Mammary epithelial cell (primary cell): ENCODE measurements at regions of chr17 and their contacts with region 1.

Region 1: GRCh38 chr17:62968445-62968923 is 2.4 kb downstream of the TANC2 start:
- DNase-seq: peak; percentile 86
- H3K4me3 ChIP-seq: peak overlapping the region; percentile 85 to 90 (median 90)
- H3K27ac ChIP-seq: peak overlapping the region; percentile 83
- H3K4me1 ChIP-seq: peaks cover 12% of the 10 kb centered on the region
- H3K27me3 ChIP-seq: no peaks in the 10 kb centered on the region
- CTCF ChIP-seq: peak; percentile 94 to 96

Region 2: DNA sequence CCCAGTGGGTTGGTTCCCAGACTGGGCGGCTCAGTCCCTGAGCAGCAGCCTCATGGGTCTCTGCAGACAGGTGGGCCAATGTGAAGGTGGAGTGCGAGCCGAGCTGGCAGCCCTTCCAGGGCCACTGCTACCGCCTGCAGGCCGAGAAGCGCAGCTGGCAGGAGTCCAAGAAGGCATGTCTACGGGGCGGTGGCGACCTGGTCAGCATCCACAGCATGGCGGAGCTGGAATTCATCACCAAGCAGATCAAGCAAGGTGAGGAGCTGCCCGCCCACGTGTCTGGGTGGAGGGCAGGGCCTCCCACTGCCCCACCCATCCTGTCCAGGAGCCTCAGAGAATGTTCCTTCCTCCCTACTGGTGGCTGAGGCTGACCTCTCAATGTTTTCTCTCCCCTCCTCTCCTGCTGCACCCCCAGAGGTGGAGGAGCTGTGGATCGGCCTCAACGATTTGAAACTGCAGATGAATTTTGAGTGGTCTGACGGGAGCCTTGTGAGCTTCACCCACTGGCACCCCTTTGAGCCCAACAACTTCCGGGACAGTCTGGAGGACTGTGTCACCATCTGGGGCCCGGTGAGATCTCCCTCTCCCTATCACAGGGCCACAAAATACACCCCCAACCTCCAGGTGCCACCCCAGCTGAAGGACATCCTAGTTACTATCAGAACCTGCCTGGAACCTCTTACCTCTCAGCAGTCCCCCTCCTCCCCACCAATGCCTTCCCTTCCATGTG is 296.7 kb before region 1 on chr17:
- CTCF ChIA-PET with region 1: no interaction called
- dilution Hi-C with region 1: no loop called
- in situ Hi-C with region 1: no loop called
- intact Hi-C with region 1: loop called (anchors 1 kb)
- DNase-seq: peak; percentile 97
- H3K4me3 ChIP-seq: peak overlapping the region in 2 of 3 experiments; percentile 28 to 32
- H3K27ac ChIP-seq: peak overlapping the region; percentile 63
- H3K4me1 ChIP-seq: peaks cover 56% of the 10 kb centered on the region
- H3K27me3 ChIP-seq: no peaks in the 10 kb centered on the region
- CTCF ChIP-seq: peak; percentile 22 to 54

Region 3: DNA sequence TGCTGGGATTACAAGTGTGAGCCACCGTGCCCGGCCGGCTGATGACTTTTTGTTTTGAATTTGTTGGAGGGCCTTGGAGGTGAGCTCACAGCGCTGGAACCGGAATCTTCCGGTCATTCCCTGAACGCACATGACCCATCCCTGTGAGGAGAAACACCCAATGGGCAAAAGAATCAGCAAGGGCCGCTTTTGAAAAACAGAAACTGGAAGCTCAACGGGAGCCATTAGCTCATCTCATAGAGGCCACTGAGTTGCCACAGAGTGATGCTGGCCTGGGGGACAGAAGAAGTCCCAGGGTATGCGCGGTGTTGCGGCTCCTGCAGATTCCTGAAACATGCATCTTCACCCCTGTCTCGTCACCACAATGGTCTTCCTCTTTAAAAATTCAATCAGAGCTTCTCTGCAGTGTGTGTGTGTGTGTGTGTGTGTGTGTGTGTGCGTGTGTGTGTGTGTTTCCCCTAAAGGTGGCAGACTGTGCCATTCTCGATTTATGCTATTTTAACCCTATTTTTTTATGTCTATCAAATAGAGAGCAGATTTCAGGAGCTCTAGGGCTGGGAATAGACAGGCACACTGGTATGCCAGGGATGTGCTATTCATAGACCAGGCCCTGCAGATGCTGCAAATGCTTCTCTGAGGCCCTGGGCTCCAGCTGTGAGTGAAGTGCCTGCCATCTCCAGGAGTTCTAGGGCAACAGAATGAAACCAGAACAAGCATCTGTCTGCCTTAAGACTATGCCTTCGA is 228.7 kb before region 1 on chr17:
- CTCF ChIA-PET with region 1: interaction called, 18 read pairs
- dilution Hi-C with region 1: no loop called
- in situ Hi-C with region 1: no loop called
- intact Hi-C with region 1: no loop called
- DNase-seq: no peak
- H3K4me3 ChIP-seq: no peak overlapping the region
- H3K27ac ChIP-seq: no peak overlapping the region
- H3K4me1 ChIP-seq: peaks cover 17% of the 10 kb centered on the region
- H3K27me3 ChIP-seq: no peaks in the 10 kb centered on the region
- CTCF ChIP-seq: no peak

Region 4: GRCh38 chr17:62778689-62779681 is 189.5 kb before region 1 on chr17:
- CTCF ChIA-PET with region 1: no interaction called
- dilution Hi-C with region 1: no loop called
- in situ Hi-C with region 1: loop called in 1 of 2 experiments (anchors 10 kb)
- intact Hi-C with region 1: loop called (anchors 1 kb)
- DNase-seq: peak; percentile 99
- H3K4me3 ChIP-seq: peak overlapping the region in 2 of 3 experiments; percentile 7 to 22
- H3K27ac ChIP-seq: peak overlapping the region; percentile 96
- H3K4me1 ChIP-seq: peaks cover 41% of the 10 kb centered on the region
- H3K27me3 ChIP-seq: no peaks in the 10 kb centered on the region
- CTCF ChIP-seq: no peak

Region 5: GRCh38 chr17:62892870-62893338 is 75.6 kb before region 1 on chr17:
- CTCF ChIA-PET with region 1: no interaction called
- dilution Hi-C with region 1: no loop called
- in situ Hi-C with region 1: loop called in 1 of 2 experiments (anchors 10 kb)
- intact Hi-C with region 1: loop called (anchors 1 kb)
- DNase-seq: peak; percentile 98
- H3K4me3 ChIP-seq: no peak overlapping the region
- H3K27ac ChIP-seq: peak overlapping the region; percentile 82
- H3K4me1 ChIP-seq: peaks cover 40% of the 10 kb centered on the region
- H3K27me3 ChIP-seq: no peaks in the 10 kb centered on the region
- CTCF ChIP-seq: no peak